Activated CD4-positive, alpha-beta T cell treated with anti-CD3 and anti-CD28 coated beads for 36 hours (primary cell): ENCODE measurements at regions of chr6 and their contacts with region 1.

Region 1: DNA sequence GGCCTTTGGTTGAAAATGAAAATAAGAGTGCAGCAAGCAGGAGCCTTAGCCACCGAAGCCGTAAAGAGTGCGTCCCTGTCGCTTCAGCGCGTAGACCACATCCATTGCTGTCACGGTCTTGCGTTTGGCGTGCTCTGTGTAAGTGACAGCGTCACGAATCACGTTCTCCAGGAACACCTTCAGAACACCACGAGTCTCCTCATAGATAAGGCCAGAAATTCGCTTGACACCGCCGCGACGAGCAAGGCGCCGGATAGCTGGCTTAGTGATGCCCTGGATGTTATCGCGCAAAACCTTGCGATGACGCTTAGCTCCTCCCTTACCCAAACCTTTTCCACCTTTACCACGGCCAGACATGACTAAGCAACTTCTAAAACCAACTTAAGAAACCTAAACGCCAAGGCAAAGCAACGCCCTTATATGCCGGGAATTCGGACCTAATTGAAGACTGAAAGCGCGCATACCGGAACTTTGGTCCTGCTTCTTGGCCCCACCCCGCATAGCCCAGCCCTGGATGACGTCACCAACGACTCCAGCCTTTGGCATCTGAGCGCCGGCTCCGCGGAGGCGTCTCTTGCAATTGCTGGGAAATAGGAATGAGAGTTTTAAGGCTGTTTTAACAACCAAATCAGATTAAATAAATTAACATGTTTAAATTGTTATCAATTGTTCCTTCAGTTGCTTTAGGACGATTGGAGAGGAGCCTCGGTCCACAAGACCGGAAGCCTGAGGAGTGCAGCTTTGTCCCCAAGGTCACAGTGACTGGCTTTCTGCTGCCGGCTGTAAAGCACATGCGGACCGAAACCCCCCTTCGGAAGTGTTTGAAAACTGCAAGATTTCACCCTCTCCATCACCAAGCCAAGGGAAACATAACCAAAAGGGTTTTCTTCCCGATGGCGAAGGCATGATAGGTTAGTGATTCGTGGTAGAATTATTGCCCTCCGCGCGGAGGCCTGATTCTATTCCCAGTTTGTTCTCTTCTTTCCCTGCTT is 79.6 kb upstream of the BTN3A2 start:
- DNase-seq: peak; percentile 98
- ATAC-seq: peak; percentile 80
- H3K4me3 Mint-ChIP-seq: peak overlapping the region; percentile 88
- H3K27ac Mint-ChIP-seq: peak overlapping the region; percentile 99
- H3K4me1 Mint-ChIP-seq: peaks cover 14% of the 10 kb centered on the region
- H3K27me3 Mint-ChIP-seq: peaks cover 3% of the 10 kb centered on the region

Region 2: DNA sequence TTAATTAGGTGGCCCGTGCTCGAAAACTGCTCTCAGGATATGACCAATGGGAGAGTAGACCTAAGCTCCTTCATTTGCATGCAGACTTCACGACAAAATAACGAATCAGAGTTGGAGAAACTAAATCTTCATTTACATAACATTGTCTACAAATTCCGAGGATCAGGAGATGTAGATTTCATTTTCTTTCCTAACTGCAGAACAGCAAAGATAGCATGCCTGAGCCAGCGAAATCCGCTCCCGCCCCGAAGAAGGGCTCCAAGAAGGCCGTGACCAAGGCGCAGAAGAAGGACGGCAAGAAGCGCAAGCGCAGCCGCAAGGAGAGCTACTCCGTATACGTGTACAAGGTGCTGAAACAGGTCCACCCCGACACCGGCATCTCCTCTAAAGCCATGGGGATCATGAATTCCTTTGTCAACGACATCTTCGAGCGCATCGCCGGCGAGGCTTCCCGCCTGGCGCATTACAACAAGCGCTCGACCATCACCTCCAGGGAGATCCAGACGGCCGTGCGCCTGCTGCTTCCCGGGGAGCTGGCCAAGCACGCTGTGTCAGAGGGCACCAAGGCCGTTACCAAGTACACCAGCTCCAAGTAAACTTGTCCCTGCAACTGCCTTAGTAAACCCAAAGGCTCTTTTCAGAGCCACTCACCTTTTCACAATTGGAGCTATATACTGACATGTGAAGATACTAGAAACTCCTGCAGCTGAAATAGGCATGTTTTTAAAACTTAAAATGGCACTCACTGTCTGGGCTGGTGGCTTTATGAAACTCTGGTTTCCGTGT is 101.7 kb before region 1 on chr6:
- CTCF ChIA-PET with region 1: interaction called, 4 read pairs
- POLR2A ChIA-PET with region 1: interaction called, 7 read pairs
- intact Hi-C with region 1: loop called in 1 of 2 experiments (anchors 2 kb)
- DNase-seq: peak; percentile 82
- ATAC-seq: peak; percentile 80
- H3K4me3 Mint-ChIP-seq: peak overlapping the region; percentile 89
- H3K27ac Mint-ChIP-seq: peak overlapping the region; percentile 92
- H3K4me1 Mint-ChIP-seq: peaks cover 45% of the 10 kb centered on the region
- H3K27me3 Mint-ChIP-seq: no peaks in the 10 kb centered on the region

Region 3: DNA sequence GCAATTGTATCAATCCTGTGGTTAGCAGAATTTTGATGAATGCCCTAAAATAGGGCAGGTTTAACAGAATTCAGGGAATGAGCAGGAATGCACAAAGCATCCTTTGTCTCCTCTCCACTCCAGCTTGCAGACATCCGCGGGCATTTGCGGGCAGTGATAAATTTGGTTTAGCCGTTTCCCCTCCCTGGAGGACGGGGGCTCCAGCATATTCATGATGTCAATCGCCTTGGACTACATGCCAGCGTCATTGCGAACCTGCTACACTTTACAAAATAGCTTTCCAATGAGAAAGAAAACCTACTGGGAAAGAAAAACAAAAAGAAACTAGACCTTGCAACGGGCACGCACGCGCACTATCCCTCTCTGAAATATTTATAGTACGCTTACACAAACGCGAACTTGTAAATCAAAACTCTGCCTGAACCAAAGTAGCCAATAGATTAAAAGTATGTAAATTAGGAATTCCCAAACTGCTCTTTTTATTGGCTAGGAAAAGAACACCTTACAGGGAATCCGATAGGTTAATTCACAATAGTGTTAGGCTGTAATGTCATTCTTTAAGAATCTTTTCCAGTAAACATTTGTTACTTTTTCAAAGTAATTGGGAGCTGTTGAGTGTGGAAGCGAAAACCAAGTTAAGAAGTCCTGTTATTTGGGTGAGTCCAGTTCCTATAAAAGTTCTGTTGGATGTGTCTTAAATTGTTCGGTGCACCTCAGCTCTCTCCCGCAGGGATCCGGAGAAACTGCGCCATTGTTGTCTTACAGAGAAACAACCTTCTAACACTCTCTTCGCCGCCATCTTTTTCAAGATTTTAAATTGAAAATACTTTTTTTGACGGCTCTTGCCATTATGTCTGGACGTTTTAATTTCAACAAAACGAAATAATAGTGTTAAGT is 61.5 kb before region 1 on chr6:
- CTCF ChIA-PET with region 1: no interaction called
- POLR2A ChIA-PET with region 1: no interaction called
- intact Hi-C with region 1: loop called in 1 of 2 experiments (anchors 2 kb)
- DNase-seq: peak; percentile 79
- ATAC-seq: peak; percentile 86
- H3K4me3 Mint-ChIP-seq: no peak overlapping the region
- H3K27ac Mint-ChIP-seq: no peak overlapping the region
- H3K4me1 Mint-ChIP-seq: peaks cover 8% of the 10 kb centered on the region
- H3K27me3 Mint-ChIP-seq: no peaks in the 10 kb centered on the region

Region 4: GRCh38 chr6:26249957-26250697 is 35.3 kb before region 1 on chr6:
- CTCF ChIA-PET with region 1: interaction called, 5 read pairs
- POLR2A ChIA-PET with region 1: no interaction called
- intact Hi-C with region 1: loop called (anchors 1 kb)
- DNase-seq: peak; percentile 85
- ATAC-seq: peak; percentile 63
- H3K4me3 Mint-ChIP-seq: peak overlapping the region; percentile 86
- H3K27ac Mint-ChIP-seq: peak overlapping the region; percentile 97
- H3K4me1 Mint-ChIP-seq: peaks cover 14% of the 10 kb centered on the region
- H3K27me3 Mint-ChIP-seq: no peaks in the 10 kb centered on the region

Region 5: GRCh38 chr6:26312501-26313390 is 27.3 kb after region 1 on chr6:
- CTCF ChIA-PET with region 1: interaction called, 5 read pairs
- POLR2A ChIA-PET with region 1: interaction called, 3 read pairs
- intact Hi-C with region 1: loop called (anchors 1 kb)
- DNase-seq: peak; percentile 89
- ATAC-seq: peak; percentile 69
- H3K4me3 Mint-ChIP-seq: peak overlapping the region; percentile 88
- H3K27ac Mint-ChIP-seq: peak overlapping the region; percentile 90
- H3K4me1 Mint-ChIP-seq: peaks cover 37% of the 10 kb centered on the region
- H3K27me3 Mint-ChIP-seq: peaks cover 3% of the 10 kb centered on the region

Region 6: DNA sequence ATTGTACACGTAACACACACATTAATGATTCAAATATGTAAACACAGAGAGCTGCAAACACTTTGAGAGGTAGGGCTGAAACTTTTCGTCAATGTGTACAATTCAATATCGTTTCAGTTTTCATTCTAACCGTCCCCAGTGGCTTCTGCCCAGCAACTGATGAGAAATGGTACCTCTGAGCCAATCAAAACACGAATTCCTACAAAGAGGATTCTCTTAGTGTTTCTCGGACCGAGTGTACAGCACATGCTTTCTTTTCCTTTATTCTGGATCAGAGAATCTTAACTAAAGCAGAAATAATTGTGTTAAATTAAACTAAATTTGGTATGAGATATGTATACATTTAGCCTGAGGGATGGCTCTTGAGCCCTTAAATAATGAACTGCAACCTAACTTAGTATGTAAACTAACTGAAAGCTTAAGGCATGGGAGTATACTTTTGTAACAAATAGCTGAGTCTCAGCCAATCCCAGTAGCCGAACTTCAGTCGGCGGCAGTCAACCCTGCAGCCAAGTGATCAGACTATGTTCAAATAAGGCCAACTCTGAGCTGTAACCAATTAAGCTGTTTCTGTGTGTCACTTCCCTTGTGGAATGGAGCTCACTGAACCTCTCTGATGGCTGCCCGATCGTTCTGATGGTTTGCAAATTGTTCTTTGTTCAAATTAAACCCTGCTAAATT is 188.5 kb after region 1 on chr6:
- CTCF ChIA-PET with region 1: no interaction called
- POLR2A ChIA-PET with region 1: no interaction called
- intact Hi-C with region 1: no loop called
- DNase-seq: peak; percentile 86
- ATAC-seq: peak; percentile 94
- H3K4me3 Mint-ChIP-seq: peak overlapping the region; percentile 100
- H3K27ac Mint-ChIP-seq: peak overlapping the region; percentile 100
- H3K4me1 Mint-ChIP-seq: peaks cover 38% of the 10 kb centered on the region
- H3K27me3 Mint-ChIP-seq: no peaks in the 10 kb centered on the region

Region 7: DNA sequence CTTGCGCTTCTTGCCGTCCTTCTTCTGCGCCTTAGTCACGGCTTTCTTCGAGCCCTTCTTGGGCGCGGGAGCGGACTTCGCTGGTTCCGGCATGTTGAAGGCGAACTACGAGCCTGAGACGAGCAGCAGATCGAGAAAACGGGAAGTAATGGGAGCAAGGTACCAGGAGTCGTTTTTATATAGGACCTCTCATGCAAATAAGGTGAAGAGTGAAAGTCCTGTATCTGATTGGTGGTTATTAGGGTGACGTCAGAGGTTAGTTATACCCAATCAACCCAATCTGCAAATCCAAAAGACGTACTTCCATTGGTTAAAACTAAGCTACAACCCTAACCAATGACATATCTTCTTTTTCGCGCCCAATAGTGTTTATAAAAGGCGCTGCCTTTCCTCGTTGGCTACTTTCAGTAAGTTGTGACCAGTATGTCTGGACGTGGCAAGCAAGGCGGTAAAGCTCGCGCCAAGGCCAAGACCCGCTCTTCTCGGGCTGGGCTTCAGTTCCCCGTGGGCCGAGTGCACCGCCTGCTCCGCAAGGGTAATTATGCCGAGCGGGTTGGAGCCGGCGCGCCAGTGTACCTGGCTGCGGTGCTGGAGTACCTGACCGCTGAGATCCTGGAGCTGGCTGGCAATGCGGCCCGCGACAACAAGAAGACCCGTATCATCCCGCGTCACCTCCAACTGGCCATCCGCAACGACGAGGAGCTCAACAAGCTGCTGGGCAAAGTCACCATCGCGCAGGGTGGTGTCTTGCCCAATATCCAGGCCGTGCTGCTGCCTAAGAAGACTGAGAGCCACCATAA is 861.5 kb after region 1 on chr6:
- CTCF ChIA-PET with region 1: interaction called, 3 read pairs
- POLR2A ChIA-PET with region 1: interaction called, 3 read pairs
- intact Hi-C with region 1: loop called in 1 of 2 experiments (anchors 5 kb)
- DNase-seq: peak; percentile 89
- ATAC-seq: peak; percentile 69
- H3K4me3 Mint-ChIP-seq: no peak overlapping the region
- H3K27ac Mint-ChIP-seq: no peak overlapping the region
- H3K4me1 Mint-ChIP-seq: peaks cover 11% of the 10 kb centered on the region
- H3K27me3 Mint-ChIP-seq: no peaks in the 10 kb centered on the region